HEK293 (cell line): ENCODE measurements at regions of chr2 and their contacts with region 1.

Region 1: DNA sequence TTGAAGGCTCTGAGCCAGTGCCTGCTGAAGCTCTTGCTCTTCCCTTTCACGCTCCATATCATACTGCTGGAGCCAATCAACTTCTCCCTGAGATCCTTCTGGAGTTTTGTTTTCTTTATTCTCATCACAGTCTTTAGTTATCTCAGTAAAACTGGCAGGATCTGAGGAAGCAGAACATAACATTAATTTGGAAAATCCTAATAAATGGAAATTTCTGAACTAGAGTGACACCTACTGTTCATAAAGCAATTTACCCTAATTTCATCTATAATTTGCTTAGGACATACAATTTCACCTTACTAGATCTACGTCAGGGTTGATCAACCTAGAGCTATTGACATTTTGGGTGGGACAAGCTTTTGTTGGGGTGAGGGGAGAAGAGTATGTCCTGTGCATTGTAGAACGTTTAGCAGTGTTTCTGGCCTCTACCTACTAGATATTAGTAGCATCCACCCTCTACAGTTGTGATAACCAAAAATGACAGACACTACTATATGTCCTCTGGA is 47.1 kb downstream of the VIL1 start:
- H3K4me3 ChIP-seq: no peak overlapping the region
- H3K27ac ChIP-seq: no peak overlapping the region
- H3K4me1 ChIP-seq: no peaks in the 10 kb centered on the region
- CTCF ChIP-seq: peak; percentile 31; the same call in 1 of the 2 replicates

Region 2: DNA sequence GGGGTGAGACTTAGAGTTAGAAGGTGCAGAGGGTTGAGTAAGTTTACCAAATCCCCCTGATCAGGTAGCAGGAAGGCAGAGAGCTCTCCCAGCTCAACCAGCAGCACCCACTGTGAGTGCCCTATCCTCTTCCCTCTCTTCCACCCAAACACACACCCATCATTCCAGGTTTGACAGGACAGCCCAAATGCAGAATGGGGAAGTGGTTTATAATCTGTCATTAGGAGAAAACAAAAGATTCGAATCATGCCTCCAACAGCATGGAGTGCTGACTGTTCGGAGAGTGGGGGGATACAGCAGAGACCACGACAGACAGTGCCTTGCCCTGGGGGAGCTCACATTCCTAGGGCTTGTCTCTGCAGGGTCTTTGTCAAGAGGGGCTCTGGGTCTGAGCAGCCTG is 328.6 kb before region 1 on chr2:
- CTCF ChIA-PET with region 1: no interaction called
- POLR2A ChIA-PET with region 1: interaction called, 12 read pairs
- H3K4me3 ChIP-seq: no peak overlapping the region
- H3K27ac ChIP-seq: no peak overlapping the region
- H3K4me1 ChIP-seq: no peaks in the 10 kb centered on the region
- CTCF ChIP-seq: no peak

Region 3: GRCh38 chr2:218404351-218405085 is 61.6 kb before region 1 on chr2:
- CTCF ChIA-PET with region 1: interaction called, 10 read pairs
- POLR2A ChIA-PET with region 1: no interaction called
- H3K4me3 ChIP-seq: no peak overlapping the region
- H3K27ac ChIP-seq: no peak overlapping the region
- H3K4me1 ChIP-seq: peaks cover 7% of the 10 kb centered on the region; the same call in 1 of the 2 replicates
- CTCF ChIP-seq: no peak

Region 4: GRCh38 chr2:218448934-218449333 is 17.1 kb before region 1 on chr2:
- CTCF ChIA-PET with region 1: interaction called, 11 read pairs
- POLR2A ChIA-PET with region 1: no interaction called
- H3K4me3 ChIP-seq: no peak overlapping the region
- H3K27ac ChIP-seq: no peak overlapping the region
- H3K4me1 ChIP-seq: no peaks in the 10 kb centered on the region
- CTCF ChIP-seq: no peak

Region 5: GRCh38 chr2:218476676-218477075 is 10.6 kb after region 1 on chr2:
- CTCF ChIA-PET with region 1: interaction called, 10 read pairs
- POLR2A ChIA-PET with region 1: no interaction called
- H3K4me3 ChIP-seq: no peak overlapping the region
- H3K27ac ChIP-seq: no peak overlapping the region
- H3K4me1 ChIP-seq: no peaks in the 10 kb centered on the region
- CTCF ChIP-seq: no peak